ENCODE measurements at regions of chr16 and their contacts with region 1.

Region 1: GRCh38 chr16:80466024-80466987 is 74.5 kb upstream of the DYNLRB2 start:
- DNase-seq: peak; percentile 65
- H3K4me3 ChIP-seq: no peak overlapping the region
- H3K27ac ChIP-seq: no peak overlapping the region
- H3K4me1 ChIP-seq: no peaks in the 10 kb centered on the region
- H3K27me3 ChIP-seq: no peaks in the 10 kb centered on the region
- CTCF ChIP-seq: peak; percentile 82

Region 2: GRCh38 chr16:79997257-79997656 is 469.0 kb before region 1 on chr16:
- CTCF ChIA-PET with region 1: no interaction called
- POLR2A ChIA-PET with region 1: no interaction called
- intact Hi-C with region 1: loop called (anchors 1 kb)
- DNase-seq: peak; percentile 30
- H3K4me3 ChIP-seq: no peak overlapping the region
- H3K27ac ChIP-seq: no peak overlapping the region
- H3K4me1 ChIP-seq: no peaks in the 10 kb centered on the region
- H3K27me3 ChIP-seq: no peaks in the 10 kb centered on the region
- CTCF ChIP-seq: peak; percentile 54

Region 3: DNA sequence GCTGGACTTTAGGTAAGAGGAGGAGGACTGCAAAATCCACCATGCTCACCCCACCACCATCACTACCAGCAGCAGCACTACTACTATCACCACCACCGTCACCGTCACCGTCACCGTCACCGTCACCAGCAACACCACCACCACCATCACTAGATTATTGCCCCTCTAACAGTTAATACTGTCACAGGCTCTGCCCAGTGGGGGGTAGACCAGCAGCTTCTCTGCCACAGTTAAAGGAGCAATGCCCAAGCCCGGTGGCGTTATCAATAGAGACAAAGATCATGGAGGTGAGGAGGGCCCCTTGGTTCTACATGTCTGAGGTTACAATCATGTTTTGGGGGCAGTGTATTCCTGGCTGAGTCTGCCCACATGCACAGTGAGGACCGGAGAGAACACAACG is 109.9 kb before region 1 on chr16:
- CTCF ChIA-PET with region 1: no interaction called
- POLR2A ChIA-PET with region 1: no interaction called
- intact Hi-C with region 1: no loop called
- DNase-seq: no peak
- H3K4me3 ChIP-seq: no peak overlapping the region
- H3K27ac ChIP-seq: no peak overlapping the region
- H3K4me1 ChIP-seq: no peaks in the 10 kb centered on the region
- H3K27me3 ChIP-seq: no peaks in the 10 kb centered on the region
- CTCF ChIP-seq: no peak

Measured in A673 (cell line).